ENCODE measurements at regions of chr14 and their contacts with region 1.

Region 1: DNA sequence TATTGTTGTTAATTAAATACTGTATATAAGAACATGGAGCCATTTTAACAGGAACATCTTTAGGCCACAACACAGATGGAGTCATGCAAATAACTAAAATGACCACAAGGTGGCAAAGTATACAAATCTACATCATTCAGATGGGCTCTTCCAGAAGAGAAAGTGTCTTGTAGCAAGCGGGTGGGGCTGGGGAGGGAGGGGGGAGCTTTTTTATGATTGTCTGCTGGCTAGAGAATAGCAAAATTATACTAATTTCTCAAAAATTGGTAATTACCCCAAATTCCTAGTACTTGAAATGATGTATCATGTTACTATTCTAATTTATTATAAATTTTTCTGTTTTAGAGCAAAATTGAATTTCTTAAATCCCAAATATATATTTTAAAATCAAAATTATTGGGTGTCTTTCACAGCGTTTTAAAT is 378.7 kb downstream of the PRKD1 start:
- DNase-seq: no peak
- H3K4me3 ChIP-seq: no peak overlapping the region
- H3K27ac ChIP-seq: no peak overlapping the region
- H3K4me1 ChIP-seq: no peaks in the 10 kb centered on the region
- H3K27me3 ChIP-seq: no peaks in the 10 kb centered on the region
- CTCF ChIP-seq: peak in 5 of 6 experiments; percentile 20 to 68 (median 58)
- POLR2A ChIP-seq: no peak

Region 2: DNA sequence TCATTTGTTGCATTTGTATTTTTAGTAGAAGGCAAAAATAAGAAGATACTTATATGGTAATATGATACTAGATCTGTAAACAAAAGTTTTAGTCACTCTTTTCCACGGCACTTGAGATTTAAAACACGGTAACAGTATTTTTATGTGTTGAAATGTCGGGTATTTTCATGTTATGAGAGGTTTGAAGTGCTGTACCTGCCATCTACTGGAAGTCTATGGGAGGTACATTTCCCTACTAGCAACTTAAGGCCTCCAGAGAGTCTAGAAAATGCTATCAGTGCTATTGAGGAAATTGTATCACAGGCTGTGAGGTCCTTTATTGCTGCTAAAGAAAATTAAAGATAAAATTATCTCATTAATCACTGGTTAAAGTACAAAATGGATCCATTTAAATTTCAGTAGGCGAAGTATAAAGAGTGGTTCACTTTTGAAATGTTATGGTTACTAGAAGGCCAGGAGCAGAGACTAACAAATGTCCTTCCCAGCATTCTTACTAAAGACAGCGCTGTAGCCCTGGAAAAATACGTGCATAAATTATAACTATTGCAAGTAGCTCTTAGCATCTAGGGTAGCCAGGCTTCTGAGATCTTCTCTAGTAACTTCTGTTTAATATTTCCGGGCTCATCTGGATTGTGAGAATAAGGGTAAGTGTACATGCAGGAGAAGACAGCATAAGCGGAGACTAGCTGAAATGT is 456.3 kb after region 1 on chr14:
- intact Hi-C with region 1: loop called (anchors 2 kb)
- DNase-seq: no peak
- H3K4me3 ChIP-seq: no peak overlapping the region
- H3K27ac ChIP-seq: no peak overlapping the region
- H3K4me1 ChIP-seq: no peaks in the 10 kb centered on the region
- H3K27me3 ChIP-seq: no peaks in the 10 kb centered on the region
- CTCF ChIP-seq: peak; percentile 24 to 87 (median 73)
- POLR2A ChIP-seq: no peak

Region 3: GRCh38 chr14:30214461-30215090 is 665.6 kb after region 1 on chr14:
- intact Hi-C with region 1: loop called (anchors 5 kb)
- DNase-seq: no peak
- H3K4me3 ChIP-seq: no peak overlapping the region
- H3K27ac ChIP-seq: no peak overlapping the region
- H3K4me1 ChIP-seq: no peaks in the 10 kb centered on the region
- H3K27me3 ChIP-seq: no peaks in the 10 kb centered on the region
- CTCF ChIP-seq: peak in 5 of 6 experiments; percentile 46 to 75 (median 62)
- POLR2A ChIP-seq: no peak